ENCODE measurements at regions of chr15 and their contacts with region 1.

Region 1: GRCh38 chr15:56537881-56538280 is 72.9 kb upstream of the MNS1 start:
- DNase-seq: peak; percentile 89
- H3K4me3 ChIP-seq: no peak overlapping the region
- H3K27ac ChIP-seq: peak overlapping the region; percentile 70
- H3K4me1 ChIP-seq: peaks cover 70% of the 10 kb centered on the region
- CTCF ChIP-seq: no peak

Region 2: DNA sequence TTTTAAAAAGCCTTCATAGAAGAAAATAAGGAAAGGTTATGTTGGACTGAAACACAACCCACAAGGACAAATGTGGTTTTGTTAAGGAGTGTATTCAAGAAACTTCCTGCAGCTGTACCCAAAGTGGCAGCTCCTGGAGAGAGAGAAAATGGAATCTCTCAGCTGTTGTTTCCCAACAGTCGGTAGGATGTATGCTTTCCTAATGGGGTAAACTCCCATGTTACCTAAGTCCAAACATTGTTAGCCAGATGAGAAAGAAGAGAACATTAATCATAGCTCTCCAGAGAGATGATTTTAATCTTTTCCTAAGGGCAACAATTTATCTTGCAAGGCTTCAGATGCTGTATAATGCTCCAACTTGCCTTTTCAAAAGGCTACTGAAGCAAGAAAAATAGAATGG is 195.2 kb before region 1 on chr15:
- CTCF ChIA-PET with region 1: no interaction called
- POLR2A ChIA-PET with region 1: no interaction called
- intact Hi-C with region 1: no loop called
- DNase-seq: no peak
- H3K4me3 ChIP-seq: no peak overlapping the region
- H3K27ac ChIP-seq: no peak overlapping the region
- H3K4me1 ChIP-seq: no peaks in the 10 kb centered on the region
- CTCF ChIP-seq: no peak

Region 3: DNA sequence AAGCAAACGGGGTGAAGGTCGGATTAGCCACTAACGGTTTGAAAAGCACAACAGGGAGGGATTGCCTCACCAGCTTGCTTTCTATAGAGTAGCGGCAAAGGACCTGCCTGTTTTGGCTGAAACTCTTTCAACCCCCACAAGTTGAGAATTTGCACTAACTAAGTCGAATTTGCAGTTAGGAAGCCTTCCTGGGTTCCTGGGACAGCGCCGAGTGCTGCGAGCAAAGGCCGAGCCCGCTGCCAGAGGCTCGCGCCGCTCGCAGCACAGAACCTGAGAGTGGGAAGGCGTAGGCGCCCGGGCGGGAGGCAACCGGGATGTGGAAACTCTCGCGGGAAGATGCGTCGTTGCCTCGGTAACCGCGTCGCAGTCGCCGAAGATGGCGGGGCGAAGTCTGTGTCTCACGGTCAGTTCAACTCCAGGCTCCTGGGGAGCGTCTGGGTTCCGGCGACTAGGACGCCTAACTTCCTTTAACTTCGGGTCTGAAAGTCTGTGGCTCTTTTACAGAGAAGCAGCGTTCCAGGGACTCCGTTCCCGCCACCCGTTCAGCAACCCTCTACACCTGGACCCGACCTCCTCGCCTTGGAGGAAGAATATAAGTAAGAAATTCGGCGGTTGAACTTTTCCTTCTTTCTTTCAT is 172.7 kb before region 1 on chr15 and contains the start of gene TEX9:
- CTCF ChIA-PET with region 1: no interaction called
- POLR2A ChIA-PET with region 1: no interaction called
- intact Hi-C with region 1: loop called (anchors 5 kb)
- DNase-seq: peak; percentile 93
- H3K4me3 ChIP-seq: peak within 1 kb of the TSS; percentile 88
- H3K27ac ChIP-seq: peak within 1 kb of the TSS; percentile 93
- H3K4me1 ChIP-seq: peaks cover 18% of the 10 kb centered on the region
- CTCF ChIP-seq: no peak
- total RNA-seq, gene TEX9: 16.9 and 20.0 TPM in 2 replicates

Region 4: GRCh38 chr15:56496635-56497034 is 41.2 kb before region 1 on chr15:
- CTCF ChIA-PET with region 1: interaction called, 8 read pairs
- POLR2A ChIA-PET with region 1: interaction called, 6 read pairs
- intact Hi-C with region 1: loop called (anchors 2 kb)
- DNase-seq: peak; percentile 88
- H3K4me3 ChIP-seq: no peak overlapping the region
- H3K27ac ChIP-seq: no peak overlapping the region
- H3K4me1 ChIP-seq: peaks cover 8% of the 10 kb centered on the region
- CTCF ChIP-seq: peak; percentile 98

Region 5: GRCh38 chr15:56568466-56569167 is 30.7 kb after region 1 on chr15:
- CTCF ChIA-PET with region 1: no interaction called
- POLR2A ChIA-PET with region 1: interaction called, 10 read pairs
- intact Hi-C with region 1: no loop called
- DNase-seq: peak; percentile 58
- H3K4me3 ChIP-seq: no peak overlapping the region
- H3K27ac ChIP-seq: no peak overlapping the region
- H3K4me1 ChIP-seq: peaks cover 9% of the 10 kb centered on the region
- CTCF ChIP-seq: no peak

Region 6: GRCh38 chr15:56608140-56608778 is 70.4 kb after region 1 on chr15:
- CTCF ChIA-PET with region 1: interaction called, 4 read pairs
- POLR2A ChIA-PET with region 1: interaction called, 38 read pairs
- intact Hi-C with region 1: loop called (anchors 1 kb)
- DNase-seq: peak; percentile 87
- H3K4me3 ChIP-seq: peak overlapping the region; percentile 62
- H3K27ac ChIP-seq: peak overlapping the region; percentile 98
- H3K4me1 ChIP-seq: peaks cover 66% of the 10 kb centered on the region
- CTCF ChIP-seq: no peak

Region 7: GRCh38 chr15:56613811-56614210 is 75.9 kb after region 1 on chr15:
- CTCF ChIA-PET with region 1: interaction called, 4 read pairs
- POLR2A ChIA-PET with region 1: interaction called, 38 read pairs
- intact Hi-C with region 1: no loop called
- DNase-seq: peak; percentile 82
- H3K4me3 ChIP-seq: no peak overlapping the region
- H3K27ac ChIP-seq: peak overlapping the region; percentile 52
- H3K4me1 ChIP-seq: peaks cover 55% of the 10 kb centered on the region
- CTCF ChIP-seq: no peak

Region 8: GRCh38 chr15:56732921-56733797 is 195.3 kb after region 1 on chr15 and contains the start of gene ZNF280D:
- CTCF ChIA-PET with region 1: no interaction called
- POLR2A ChIA-PET with region 1: interaction called, 5 read pairs
- intact Hi-C with region 1: loop called (anchors 2 kb)
- DNase-seq: peak; percentile 73
- H3K4me3 ChIP-seq: peak within 1 kb of the TSS; percentile 74
- H3K27ac ChIP-seq: peak within 1 kb of the TSS; percentile 60
- H3K4me1 ChIP-seq: peaks cover 26% of the 10 kb centered on the region
- CTCF ChIP-seq: no peak
- total RNA-seq, gene ZNF280D: 7.1 and 10.7 TPM in 2 replicates

Measured in OCI-LY7 (cell line).